Natural killer cell (primary cell): ENCODE measurements at regions of chr3 and their contacts with region 1.

Region 1: GRCh38 chr3:151327571-151328198 is 1.7 kb downstream of the P2RY13 start:
- DNase-seq: peak in 1 of 2 donors; percentile 28
- ATAC-seq: no peak
- H3K4me3 ChIP-seq: no peak overlapping the region
- H3K4me3 Mint-ChIP-seq: peak overlapping the region; percentile 72
- H3K27ac ChIP-seq: no peak overlapping the region
- H3K27ac Mint-ChIP-seq: peak overlapping the region; percentile 84 to 86
- H3K4me1 ChIP-seq: peaks cover 4% of the 10 kb centered on the region
- H3K4me1 Mint-ChIP-seq: peaks cover 16 to 28% of the 10 kb centered on the region in 2 donors
- H3K27me3 ChIP-seq: peaks cover 2% of the 10 kb centered on the region
- H3K27me3 Mint-ChIP-seq: no peaks in the 10 kb centered on the region
- CTCF ChIP-seq: peak; percentile 46

Region 2: GRCh38 chr3:151230646-151231045 is 97.0 kb before region 1 on chr3:
- intact Hi-C with region 1: no loop called
- DNase-seq: peak in 1 of 2 donors; percentile 25
- ATAC-seq: peak in 2 of 3 donors; percentile 34 to 45
- H3K4me3 ChIP-seq: peak overlapping the region; percentile 6
- H3K4me3 Mint-ChIP-seq: peak overlapping the region; percentile 57
- H3K27ac ChIP-seq: peak overlapping the region; percentile 61
- H3K27ac Mint-ChIP-seq: peak overlapping the region; percentile 12 to 61
- H3K4me1 ChIP-seq: peaks cover 29% of the 10 kb centered on the region
- H3K4me1 Mint-ChIP-seq: peaks cover 39 to 46% of the 10 kb centered on the region in 2 donors
- H3K27me3 ChIP-seq: no peaks in the 10 kb centered on the region
- H3K27me3 Mint-ChIP-seq: peaks cover 0 to 4% of the 10 kb centered on the region in 2 donors
- CTCF ChIP-seq: no peak

Region 3: GRCh38 chr3:151350656-151351618 is 23.3 kb after region 1 on chr3:
- intact Hi-C with region 1: no loop called
- DNase-seq: no peak
- ATAC-seq: no peak
- H3K4me3 ChIP-seq: no peak overlapping the region
- H3K4me3 Mint-ChIP-seq: no peak overlapping the region
- H3K27ac ChIP-seq: no peak overlapping the region
- H3K27ac Mint-ChIP-seq: no peak overlapping the region
- H3K4me1 ChIP-seq: peaks cover 6% of the 10 kb centered on the region
- H3K4me1 Mint-ChIP-seq: peaks cover 20 to 22% of the 10 kb centered on the region in 2 donors
- H3K27me3 ChIP-seq: no peaks in the 10 kb centered on the region
- H3K27me3 Mint-ChIP-seq: no peaks in the 10 kb centered on the region
- CTCF ChIP-seq: no peak

Region 4: GRCh38 chr3:151460774-151461450 is 133.2 kb after region 1 on chr3 and contains the start of gene IGSF10:
- intact Hi-C with region 1: no loop called
- DNase-seq: no peak
- ATAC-seq: no peak
- H3K4me3 ChIP-seq: no peak within 1 kb of the TSS
- H3K4me3 Mint-ChIP-seq: peak within 1 kb of the TSS; percentile 10
- H3K27ac ChIP-seq: no peak within 1 kb of the TSS
- H3K27ac Mint-ChIP-seq: no peak within 1 kb of the TSS
- H3K4me1 ChIP-seq: peaks cover 4% of the 10 kb centered on the region
- H3K4me1 Mint-ChIP-seq: no peaks in the 10 kb centered on the region
- H3K27me3 ChIP-seq: peaks cover 3% of the 10 kb centered on the region
- H3K27me3 Mint-ChIP-seq: peaks cover 18 to 20% of the 10 kb centered on the region in 2 donors
- CTCF ChIP-seq: no peak
- total RNA-seq, gene IGSF10: 0.02 TPM in 1 of 3 donors, not detected in the others

Region 5: GRCh38 chr3:151890721-151891141 is 563.0 kb after region 1 on chr3:
- intact Hi-C with region 1: loop called (anchors 5 kb)
- DNase-seq: peak in 1 of 2 donors; percentile 26
- ATAC-seq: peak; percentile 82 to 92 (median 87)
- H3K4me3 ChIP-seq: no peak overlapping the region
- H3K4me3 Mint-ChIP-seq: peak overlapping the region; percentile 72
- H3K27ac ChIP-seq: peak overlapping the region; percentile 32
- H3K27ac Mint-ChIP-seq: peak overlapping the region; percentile 62 to 88
- H3K4me1 ChIP-seq: peaks cover 26% of the 10 kb centered on the region
- H3K4me1 Mint-ChIP-seq: peaks cover 40 to 48% of the 10 kb centered on the region in 2 donors
- H3K27me3 ChIP-seq: no peaks in the 10 kb centered on the region
- H3K27me3 Mint-ChIP-seq: no peaks in the 10 kb centered on the region
- CTCF ChIP-seq: no peak